B cell (primary cell): ENCODE measurements at regions of chr10 and their contacts with region 1.

Region 1: GRCh38 chr10:97400665-97401454 is at the start of gene RRP12:
- DNase-seq: peak; percentile 97
- ATAC-seq: peak; percentile 88
- H3K4me3 ChIP-seq: peak within 1 kb of the TSS; percentile 68 to 98 (median 81)
- H3K4me3 Mint-ChIP-seq: peak within 1 kb of the TSS; percentile 98
- H3K27ac ChIP-seq: peak within 1 kb of the TSS; percentile 90 to 94
- H3K27ac Mint-ChIP-seq: peak within 1 kb of the TSS; percentile 97
- H3K4me1 ChIP-seq: peaks cover 12 to 19% of the 10 kb centered on the region in 2 donors
- H3K4me1 Mint-ChIP-seq: peaks cover 15% of the 10 kb centered on the region
- H3K27me3 ChIP-seq: no peaks in the 10 kb centered on the region
- H3K27me3 Mint-ChIP-seq: no peaks in the 10 kb centered on the region
- CTCF ChIP-seq: no peak
- total RNA-seq, gene RRP12: 33.6 and 35.7 TPM in 2 replicates

Region 2: DNA sequence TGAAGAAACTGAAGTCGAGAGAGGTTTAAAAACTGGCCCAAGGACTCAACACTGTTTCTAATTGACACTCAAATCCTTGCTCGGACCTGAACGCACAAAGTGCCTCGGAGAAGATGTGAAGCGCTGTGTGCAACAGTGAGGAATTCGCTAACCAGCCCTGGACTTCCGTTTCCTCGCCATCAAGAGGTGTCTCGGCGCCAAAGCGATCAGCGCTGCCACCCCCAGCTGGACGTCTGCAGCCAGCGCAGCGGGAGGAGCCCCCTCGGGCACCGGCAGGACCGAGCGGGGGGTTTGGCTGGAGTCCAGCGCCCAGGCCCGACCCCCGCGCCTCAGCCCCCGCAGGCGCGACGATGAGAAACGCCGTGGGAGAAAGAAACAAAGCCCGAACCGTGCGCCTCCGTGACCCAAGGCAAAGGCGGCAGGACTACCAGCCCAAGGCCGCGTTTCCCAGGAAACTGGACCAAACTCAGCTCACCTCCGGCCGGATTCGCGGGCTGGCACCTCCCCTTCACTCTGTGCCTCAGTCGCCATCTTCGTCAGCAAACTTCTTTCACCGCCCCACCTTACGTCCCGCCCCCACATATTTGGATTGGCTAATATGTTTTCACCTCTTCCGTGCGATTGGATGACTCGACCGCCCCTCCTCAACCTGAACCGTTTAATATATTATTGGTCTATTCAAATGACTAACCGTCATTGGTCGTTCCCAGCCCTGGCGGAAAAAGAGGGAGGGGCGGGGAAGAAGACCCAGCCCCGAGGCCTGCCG is 108.6 kb before region 1 on chr10 and contains the start of gene ARHGAP19:
- CTCF ChIA-PET with region 1: no interaction called
- POLR2A ChIA-PET with region 1: no interaction called
- intact Hi-C with region 1: loop called (anchors 1 kb)
- DNase-seq: peak; percentile 96
- ATAC-seq: peak; percentile 98
- H3K4me3 ChIP-seq: peak within 1 kb of the TSS; percentile 63 to 98 (median 91)
- H3K4me3 Mint-ChIP-seq: peak within 1 kb of the TSS; percentile 90
- H3K27ac ChIP-seq: peak within 1 kb of the TSS; percentile 48 to 85
- H3K27ac Mint-ChIP-seq: peak within 1 kb of the TSS; percentile 86
- H3K4me1 ChIP-seq: peaks cover 6 to 12% of the 10 kb centered on the region in 2 donors
- H3K4me1 Mint-ChIP-seq: peaks cover 16% of the 10 kb centered on the region
- H3K27me3 ChIP-seq: no peaks in the 10 kb centered on the region
- H3K27me3 Mint-ChIP-seq: no peaks in the 10 kb centered on the region
- CTCF ChIP-seq: no peak
- total RNA-seq, gene ARHGAP19: 21.7 and 22.5 TPM in 2 replicates

Region 3: GRCh38 chr10:97318772-97319651 is 81.8 kb before region 1 on chr10 and contains the start of gene FRAT1:
- CTCF ChIA-PET with region 1: interaction called, 16 read pairs
- POLR2A ChIA-PET with region 1: interaction called, 12 read pairs
- intact Hi-C with region 1: no loop called
- DNase-seq: peak; percentile 98
- ATAC-seq: peak; percentile 68
- H3K4me3 ChIP-seq: peak within 1 kb of the TSS; percentile 57 to 86 (median 79)
- H3K4me3 Mint-ChIP-seq: peak within 1 kb of the TSS; percentile 98
- H3K27ac ChIP-seq: peak within 1 kb of the TSS; percentile 97 to 100
- H3K27ac Mint-ChIP-seq: peak within 1 kb of the TSS; percentile 100
- H3K4me1 ChIP-seq: peaks cover 18 to 28% of the 10 kb centered on the region in 2 donors
- H3K4me1 Mint-ChIP-seq: peaks cover 33% of the 10 kb centered on the region
- H3K27me3 ChIP-seq: no peaks in the 10 kb centered on the region
- H3K27me3 Mint-ChIP-seq: no peaks in the 10 kb centered on the region
- CTCF ChIP-seq: no peak
- total RNA-seq, gene FRAT1: 25.3 and 27.8 TPM in 2 replicates

Region 4: GRCh38 chr10:97334370-97335175 is 66.3 kb before region 1 on chr10 and contains the start of gene FRAT2:
- CTCF ChIA-PET with region 1: interaction called, 3 read pairs
- POLR2A ChIA-PET with region 1: no interaction called
- intact Hi-C with region 1: loop called (anchors 1 kb)
- DNase-seq: peak; percentile 98
- ATAC-seq: peak; percentile 90
- H3K4me3 ChIP-seq: peak within 1 kb of the TSS; percentile 60 to 86 (median 75)
- H3K4me3 Mint-ChIP-seq: peak within 1 kb of the TSS; percentile 88
- H3K27ac ChIP-seq: peak within 1 kb of the TSS; percentile 93 to 100
- H3K27ac Mint-ChIP-seq: peak within 1 kb of the TSS; percentile 98
- H3K4me1 ChIP-seq: peaks cover 29 to 30% of the 10 kb centered on the region in 2 donors
- H3K4me1 Mint-ChIP-seq: peaks cover 33% of the 10 kb centered on the region
- H3K27me3 ChIP-seq: no peaks in the 10 kb centered on the region
- H3K27me3 Mint-ChIP-seq: no peaks in the 10 kb centered on the region
- CTCF ChIP-seq: no peak
- total RNA-seq, gene FRAT2: 30.2 and 31.5 TPM in 2 replicates

Region 5: DNA sequence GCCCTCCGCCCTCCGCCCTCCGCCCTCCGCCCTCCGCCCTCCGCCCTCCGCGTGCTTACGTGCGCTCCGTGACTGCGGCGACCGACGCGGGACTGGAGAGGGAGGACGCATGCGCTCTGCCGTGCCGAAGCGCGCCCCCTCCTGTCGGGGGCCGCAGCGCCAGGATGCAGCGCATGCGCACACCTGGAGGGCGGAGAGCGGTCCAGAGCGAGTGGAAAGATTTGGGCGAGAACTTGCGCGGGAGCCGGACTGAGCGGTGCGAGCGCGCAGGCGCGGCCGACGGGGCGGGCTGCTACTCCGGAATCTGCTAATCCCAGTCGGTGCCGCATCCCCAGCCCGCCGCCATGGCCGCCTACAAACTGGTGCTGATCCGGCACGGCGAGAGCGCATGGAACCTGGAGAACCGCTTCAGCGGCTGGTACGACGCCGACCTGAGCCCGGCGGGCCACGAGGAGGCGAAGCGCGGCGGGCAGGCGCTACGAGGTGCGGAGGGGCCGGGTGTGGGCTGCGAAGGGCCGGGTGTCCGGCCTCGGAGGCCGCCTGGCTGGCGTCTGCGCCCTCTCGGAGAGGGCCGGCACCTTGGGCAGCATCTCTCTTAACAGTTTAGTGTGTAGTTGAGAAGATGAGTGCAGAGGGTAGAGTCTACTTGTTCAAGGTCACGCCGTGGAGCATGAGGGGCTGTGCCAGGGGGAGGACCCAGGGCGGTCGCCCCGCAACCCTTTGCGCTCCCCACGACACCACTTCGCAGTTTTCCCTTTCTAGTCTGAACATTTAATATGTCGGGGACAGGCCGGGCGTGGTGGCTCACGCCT is 25.3 kb after region 1 on chr10 and contains the start of gene PGAM1:
- CTCF ChIA-PET with region 1: interaction called, 26 read pairs
- POLR2A ChIA-PET with region 1: no interaction called
- intact Hi-C with region 1: loop called (anchors 1 kb)
- DNase-seq: peak; percentile 98
- ATAC-seq: peak; percentile 87
- H3K4me3 ChIP-seq: peak within 1 kb of the TSS; percentile 72 to 87 (median 80)
- H3K4me3 Mint-ChIP-seq: peak within 1 kb of the TSS; percentile 97
- H3K27ac ChIP-seq: peak within 1 kb of the TSS; percentile 72 to 81
- H3K27ac Mint-ChIP-seq: peak within 1 kb of the TSS; percentile 99
- H3K4me1 ChIP-seq: peaks cover 21 to 31% of the 10 kb centered on the region in 2 donors
- H3K4me1 Mint-ChIP-seq: peaks cover 43% of the 10 kb centered on the region
- H3K27me3 ChIP-seq: no peaks in the 10 kb centered on the region
- H3K27me3 Mint-ChIP-seq: no peaks in the 10 kb centered on the region
- CTCF ChIP-seq: peak; percentile 65
- total RNA-seq, gene PGAM1: 80.3 and 83.4 TPM in 2 replicates

Region 6: GRCh38 chr10:97640174-97640867 is 239.5 kb after region 1 on chr10 and contains the start of gene PI4K2A:
- CTCF ChIA-PET with region 1: no interaction called
- POLR2A ChIA-PET with region 1: no interaction called
- intact Hi-C with region 1: loop called (anchors 1 kb)
- DNase-seq: peak; percentile 99
- ATAC-seq: peak; percentile 96
- H3K4me3 ChIP-seq: peak within 1 kb of the TSS; percentile 43 to 84 (median 77)
- H3K4me3 Mint-ChIP-seq: peak within 1 kb of the TSS; percentile 99
- H3K27ac ChIP-seq: peak within 1 kb of the TSS; percentile 70 to 86
- H3K27ac Mint-ChIP-seq: peak within 1 kb of the TSS; percentile 97
- H3K4me1 ChIP-seq: peaks cover 8 to 18% of the 10 kb centered on the region in 2 donors
- H3K4me1 Mint-ChIP-seq: peaks cover 22% of the 10 kb centered on the region
- H3K27me3 ChIP-seq: no peaks in the 10 kb centered on the region
- H3K27me3 Mint-ChIP-seq: no peaks in the 10 kb centered on the region
- CTCF ChIP-seq: no peak
- total RNA-seq, gene PI4K2A: 17.7 and 18.4 TPM in 2 replicates